ENCODE measurements at regions of chr19 and their contacts with region 1.

Region 1: DNA sequence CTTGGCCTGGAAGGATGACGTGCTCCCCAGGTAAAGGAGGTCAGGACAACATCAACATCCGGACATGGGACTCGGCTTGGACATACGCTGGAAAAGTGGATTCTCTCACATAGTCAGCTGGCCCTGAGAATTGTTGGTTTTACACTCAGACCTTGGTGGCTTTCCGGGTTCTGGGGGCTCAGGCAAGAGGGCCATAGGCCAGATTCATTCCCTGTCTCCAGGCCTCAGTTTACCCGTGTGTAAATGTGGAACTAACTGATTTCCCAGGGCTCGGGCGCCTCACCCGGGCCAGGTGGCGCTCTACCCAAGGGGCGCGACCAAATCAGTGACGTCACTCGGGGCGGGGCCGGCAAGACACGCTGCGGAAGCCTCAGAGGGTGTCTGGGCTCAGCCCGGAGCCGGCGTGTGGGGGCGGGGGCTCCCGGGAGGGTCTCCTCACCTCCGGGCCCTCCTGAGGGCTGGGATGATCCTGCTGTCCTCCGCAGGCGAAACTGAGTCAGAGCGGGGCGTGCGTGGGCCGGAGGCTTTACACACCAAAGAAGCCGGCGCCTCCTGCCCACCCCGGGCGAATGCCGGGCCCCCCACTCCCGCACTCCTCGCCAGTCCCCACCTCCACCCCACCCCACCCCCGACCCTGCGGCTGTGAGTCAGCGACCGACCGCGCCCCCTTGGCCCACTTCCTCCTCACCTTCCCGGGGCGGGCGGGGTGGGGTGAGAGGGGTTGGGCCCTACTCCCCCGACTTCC is 861 bp upstream of the VASP start:
- DNase-seq: peak; percentile 100
- ATAC-seq: peak; percentile 80
- H3K4me3 Mint-ChIP-seq: peak overlapping the region; percentile 85
- H3K27ac Mint-ChIP-seq: peak overlapping the region; percentile 96
- H3K4me1 Mint-ChIP-seq: peaks cover 38% of the 10 kb centered on the region
- H3K27me3 Mint-ChIP-seq: no peaks in the 10 kb centered on the region

Region 2: GRCh38 chr19:45001087-45001739 is 505.2 kb before region 1 on chr19 and contains the start of gene RELB:
- CTCF ChIA-PET with region 1: no interaction called
- POLR2A ChIA-PET with region 1: no interaction called
- intact Hi-C with region 1: loop called in 1 of 2 experiments (anchors 5 kb)
- DNase-seq: peak; percentile 97
- ATAC-seq: peak; percentile 53
- H3K4me3 Mint-ChIP-seq: peak within 1 kb of the TSS; percentile 94
- H3K27ac Mint-ChIP-seq: peak within 1 kb of the TSS; percentile 97
- H3K4me1 Mint-ChIP-seq: peaks cover 16% of the 10 kb centered on the region
- H3K27me3 Mint-ChIP-seq: no peaks in the 10 kb centered on the region
- total RNA-seq, gene RELB: 43.8 to 51.2 TPM

Region 3: DNA sequence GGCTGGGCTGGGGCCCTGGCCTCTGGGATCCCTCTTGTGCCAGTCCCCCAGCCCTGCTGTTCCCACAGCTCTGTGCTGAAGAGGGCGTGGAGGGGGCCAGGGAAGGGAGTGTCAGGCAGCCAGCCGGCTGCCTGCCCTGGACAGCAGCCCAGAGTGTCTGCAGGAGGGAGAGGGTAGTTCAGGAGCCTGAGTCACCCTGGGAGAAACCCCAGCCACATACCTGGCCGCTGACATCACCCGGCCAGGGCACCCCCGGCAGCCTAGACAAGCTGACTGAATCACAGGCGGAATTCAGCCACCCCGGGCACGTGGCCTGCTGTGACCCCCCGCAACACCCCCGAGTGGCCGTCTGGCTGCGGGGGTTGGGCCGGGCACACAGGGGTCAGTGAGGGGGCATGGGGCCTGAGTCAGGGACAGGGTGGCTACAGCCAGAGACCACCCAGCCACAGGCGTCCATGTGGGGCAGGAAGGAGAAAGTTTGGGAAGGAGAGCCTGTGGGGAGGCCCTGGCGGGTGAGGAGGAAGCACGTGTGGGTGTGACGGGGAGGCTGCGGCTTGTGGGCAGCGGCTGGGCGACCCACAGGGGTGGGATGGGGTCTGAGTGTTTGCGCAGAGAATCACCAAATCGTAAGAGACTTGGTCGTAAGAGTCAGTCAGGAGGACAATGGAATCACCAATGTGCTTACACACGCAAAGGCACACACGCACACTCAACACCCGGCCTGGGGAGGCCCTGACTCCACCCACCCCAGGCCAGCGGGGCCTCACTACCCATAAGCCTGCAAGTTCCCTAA is 50.5 kb before region 1 on chr19:
- CTCF ChIA-PET with region 1: no interaction called
- POLR2A ChIA-PET with region 1: no interaction called
- intact Hi-C with region 1: loop called in 1 of 2 experiments (anchors 2 kb)
- DNase-seq: peak; percentile 84
- ATAC-seq: peak; percentile 82
- H3K4me3 Mint-ChIP-seq: peak overlapping the region; percentile 5
- H3K27ac Mint-ChIP-seq: peak overlapping the region; percentile 65
- H3K4me1 Mint-ChIP-seq: peaks cover 23% of the 10 kb centered on the region
- H3K27me3 Mint-ChIP-seq: no peaks in the 10 kb centered on the region

Region 4: DNA sequence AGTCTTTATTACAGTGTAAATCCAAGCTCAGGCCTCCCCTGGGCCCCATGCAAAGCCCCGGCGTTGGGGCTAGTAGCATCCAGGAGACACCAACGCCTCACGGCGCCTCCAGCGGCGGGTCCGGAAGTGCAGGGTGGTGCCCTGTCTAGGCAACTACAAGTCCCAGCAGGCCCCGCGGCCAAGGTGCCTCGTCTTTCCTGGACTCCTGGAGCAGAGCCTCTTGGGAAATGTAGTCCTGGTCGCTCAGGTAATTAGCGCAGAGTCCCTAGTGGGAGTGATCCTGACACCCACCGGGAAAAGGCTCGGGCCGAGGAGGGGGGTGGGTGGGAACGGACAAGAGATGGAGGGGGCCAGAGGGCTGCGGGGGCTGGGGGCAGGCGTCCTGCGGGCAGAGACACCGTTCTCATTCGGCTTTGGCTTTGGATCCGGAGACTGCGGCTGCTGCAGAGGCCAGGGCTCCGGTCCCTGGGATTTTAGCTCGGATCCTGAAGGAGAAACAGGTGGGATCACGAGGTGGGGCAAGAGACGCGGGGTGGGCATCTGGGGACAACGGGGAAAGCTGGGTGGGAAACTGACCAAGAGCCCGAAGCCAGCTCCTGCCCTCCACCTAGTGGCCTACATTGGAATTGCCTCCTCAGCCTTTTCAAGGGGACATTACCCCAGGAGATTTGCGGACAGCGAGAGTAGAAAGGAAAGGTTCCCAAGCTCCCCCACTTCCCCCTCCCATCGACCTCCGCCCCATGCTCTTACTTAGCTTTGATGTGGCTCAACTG is 20.9 kb before region 1 on chr19:
- CTCF ChIA-PET with region 1: interaction called, 15 read pairs
- POLR2A ChIA-PET with region 1: no interaction called
- intact Hi-C with region 1: loop called in 1 of 2 experiments (anchors 1 kb)
- DNase-seq: peak; percentile 100
- ATAC-seq: peak; percentile 99
- H3K4me3 Mint-ChIP-seq: peak overlapping the region; percentile 83
- H3K27ac Mint-ChIP-seq: peak overlapping the region; percentile 91
- H3K4me1 Mint-ChIP-seq: peaks cover 13% of the 10 kb centered on the region
- H3K27me3 Mint-ChIP-seq: peaks cover 2% of the 10 kb centered on the region

Region 5: GRCh38 chr19:45717166-45717982 is 211.0 kb after region 1 on chr19:
- CTCF ChIA-PET with region 1: no interaction called
- POLR2A ChIA-PET with region 1: no interaction called
- intact Hi-C with region 1: loop called in 1 of 2 experiments (anchors 1 kb)
- DNase-seq: peak; percentile 99
- ATAC-seq: peak; percentile 97
- H3K4me3 Mint-ChIP-seq: peak overlapping the region; percentile 93
- H3K27ac Mint-ChIP-seq: peak overlapping the region; percentile 94
- H3K4me1 Mint-ChIP-seq: peaks cover 40% of the 10 kb centered on the region
- H3K27me3 Mint-ChIP-seq: no peaks in the 10 kb centered on the region

Region 6: DNA sequence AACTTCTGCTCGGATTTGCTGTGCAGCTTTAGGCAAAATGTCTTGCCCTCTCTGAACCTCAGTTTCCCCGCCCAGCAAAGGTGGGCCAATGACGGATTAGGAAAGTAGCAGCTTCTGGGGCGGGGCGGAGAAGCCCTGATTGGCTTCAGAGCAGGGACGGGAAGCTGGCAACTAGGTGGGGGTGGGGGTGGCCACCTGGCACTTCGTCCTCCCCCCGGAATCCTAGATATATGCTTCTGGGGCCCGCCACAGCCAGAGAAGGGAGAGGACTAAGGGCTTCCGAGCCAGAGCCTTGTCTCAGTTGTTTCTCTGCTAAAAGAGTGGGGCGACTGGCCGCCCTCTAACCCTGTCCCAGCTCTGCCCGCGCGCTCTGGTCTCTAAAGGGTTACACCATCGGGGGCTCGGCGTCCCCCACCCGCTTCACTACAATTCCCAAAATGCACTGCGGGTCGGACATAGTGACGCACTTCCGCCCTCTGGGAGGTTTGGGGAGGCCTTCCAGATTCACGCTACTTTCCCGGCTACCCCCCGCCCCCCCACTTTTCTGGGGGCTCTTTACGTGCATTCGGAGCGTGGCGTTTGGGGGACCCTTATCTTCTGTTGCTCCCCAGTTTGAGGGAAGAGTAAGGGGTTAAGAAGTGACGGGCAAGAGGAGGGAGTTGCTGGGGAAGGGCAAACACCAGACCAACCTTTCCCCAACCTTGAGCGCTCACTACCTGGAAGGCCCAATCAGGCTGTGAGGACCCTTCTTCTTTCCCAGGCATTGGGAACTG is 380.2 kb after region 1 on chr19:
- CTCF ChIA-PET with region 1: no interaction called
- POLR2A ChIA-PET with region 1: no interaction called
- intact Hi-C with region 1: loop called in 1 of 2 experiments (anchors 1 kb)
- DNase-seq: peak; percentile 96
- ATAC-seq: peak; percentile 85
- H3K4me3 Mint-ChIP-seq: peak overlapping the region; percentile 85
- H3K27ac Mint-ChIP-seq: peak overlapping the region; percentile 95
- H3K4me1 Mint-ChIP-seq: peaks cover 17% of the 10 kb centered on the region
- H3K27me3 Mint-ChIP-seq: no peaks in the 10 kb centered on the region